Activated CD4-positive, alpha-beta T cell treated with anti-CD3 and anti-CD28 coated beads for 36 hours (primary cell): ENCODE measurements at regions of chr16 and their contacts with region 1.

Region 1: GRCh38 chr16:11255737-11256660 is at the start of gene SOCS1:
- DNase-seq: peak; percentile 94
- ATAC-seq: peak; percentile 54
- H3K4me3 Mint-ChIP-seq: peak within 1 kb of the TSS; percentile 98
- H3K27ac Mint-ChIP-seq: peak within 1 kb of the TSS; percentile 98
- H3K4me1 Mint-ChIP-seq: peaks cover 46% of the 10 kb centered on the region
- H3K27me3 Mint-ChIP-seq: no peaks in the 10 kb centered on the region
- total RNA-seq, gene SOCS1: 100.0 to 103 TPM

Region 2: DNA sequence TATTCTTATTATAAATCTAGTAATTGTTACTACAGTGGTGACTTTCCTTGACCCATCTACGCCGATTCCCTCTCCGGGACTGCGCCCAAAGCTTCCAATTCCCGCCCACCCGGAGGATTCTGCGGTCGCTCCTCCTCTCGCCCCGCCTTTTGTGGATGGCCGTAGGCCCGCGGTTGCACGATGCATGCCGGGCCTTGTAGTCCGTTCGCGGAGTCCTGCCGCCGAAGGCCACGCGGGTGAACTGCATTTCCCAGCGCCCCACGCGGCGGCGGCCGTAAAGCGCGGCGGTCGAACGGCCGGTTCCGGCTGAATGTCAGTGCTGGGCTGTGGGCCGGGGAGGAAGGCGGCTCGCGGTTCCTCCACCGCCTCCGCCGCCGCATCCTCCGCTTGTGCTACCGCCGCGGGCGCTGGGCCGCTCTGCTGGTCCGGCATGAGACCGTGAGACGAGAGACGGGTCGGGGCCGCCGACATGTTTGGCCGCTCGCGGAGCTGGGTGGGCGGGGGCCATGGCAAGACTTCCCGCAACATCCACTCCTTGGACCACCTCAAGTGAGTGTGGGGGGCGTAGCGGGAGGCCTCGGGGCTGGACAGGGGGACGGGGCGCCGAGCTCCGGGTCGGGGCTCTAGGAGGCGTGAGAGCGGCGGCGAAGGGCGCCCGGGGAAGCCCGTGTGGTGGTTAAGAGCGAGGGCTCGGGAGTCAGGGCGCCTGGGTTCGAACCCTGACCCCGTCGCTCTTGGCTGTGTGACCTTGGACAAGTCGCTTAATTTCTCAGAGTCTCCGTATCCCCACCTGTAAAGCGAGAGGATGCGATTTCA is 311.5 kb before region 1 on chr16 and contains the start of gene CLEC16A:
- CTCF ChIA-PET with region 1: no interaction called
- POLR2A ChIA-PET with region 1: interaction called, 3 read pairs
- intact Hi-C with region 1: loop called in 1 of 2 experiments (anchors 1 kb)
- DNase-seq: peak; percentile 98
- ATAC-seq: peak; percentile 77
- H3K4me3 Mint-ChIP-seq: peak within 1 kb of the TSS; percentile 95
- H3K27ac Mint-ChIP-seq: peak within 1 kb of the TSS; percentile 80
- H3K4me1 Mint-ChIP-seq: peaks cover 69% of the 10 kb centered on the region
- H3K27me3 Mint-ChIP-seq: no peaks in the 10 kb centered on the region
- total RNA-seq, gene CLEC16A: 23.5 to 25.4 TPM

Region 3: DNA sequence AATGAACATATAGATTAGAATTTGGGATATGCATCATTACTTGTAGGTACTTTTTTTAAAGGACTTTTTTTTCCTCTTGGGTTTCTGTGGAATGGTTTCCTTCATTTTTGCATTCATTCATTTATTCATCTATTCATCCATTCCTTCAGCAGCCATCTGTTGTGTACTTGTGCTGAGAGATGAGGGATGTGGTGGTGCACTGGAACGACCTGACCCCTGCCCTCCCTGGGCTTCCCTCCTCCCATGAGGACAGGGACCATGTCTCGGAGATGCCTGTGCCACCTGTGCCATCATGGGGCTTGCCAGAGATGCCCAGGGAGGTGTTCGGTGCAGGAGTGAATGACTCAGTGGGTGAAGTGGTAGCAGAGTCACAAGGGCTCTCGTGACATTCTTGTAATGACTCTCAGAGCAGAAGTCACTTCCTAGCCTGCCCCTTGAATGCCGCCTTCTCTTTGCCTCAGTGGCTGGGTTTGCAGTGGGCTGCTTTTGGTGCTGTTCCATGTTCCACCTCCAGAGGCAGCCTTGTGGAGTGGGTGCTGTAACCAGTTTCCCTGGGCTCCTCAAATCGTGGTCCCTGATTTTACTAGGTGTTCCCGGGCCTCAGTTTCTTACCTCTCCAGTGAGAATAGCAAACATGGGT is 267.7 kb before region 1 on chr16:
- CTCF ChIA-PET with region 1: interaction called, 4 read pairs
- POLR2A ChIA-PET with region 1: interaction called, 4 read pairs
- intact Hi-C with region 1: loop called (anchors 1 kb)
- DNase-seq: peak; percentile 91
- ATAC-seq: peak; percentile 88
- H3K4me3 Mint-ChIP-seq: peak overlapping the region; percentile 46
- H3K27ac Mint-ChIP-seq: peak overlapping the region; percentile 92
- H3K4me1 Mint-ChIP-seq: peaks cover 89% of the 10 kb centered on the region
- H3K27me3 Mint-ChIP-seq: no peaks in the 10 kb centered on the region

Region 4: DNA sequence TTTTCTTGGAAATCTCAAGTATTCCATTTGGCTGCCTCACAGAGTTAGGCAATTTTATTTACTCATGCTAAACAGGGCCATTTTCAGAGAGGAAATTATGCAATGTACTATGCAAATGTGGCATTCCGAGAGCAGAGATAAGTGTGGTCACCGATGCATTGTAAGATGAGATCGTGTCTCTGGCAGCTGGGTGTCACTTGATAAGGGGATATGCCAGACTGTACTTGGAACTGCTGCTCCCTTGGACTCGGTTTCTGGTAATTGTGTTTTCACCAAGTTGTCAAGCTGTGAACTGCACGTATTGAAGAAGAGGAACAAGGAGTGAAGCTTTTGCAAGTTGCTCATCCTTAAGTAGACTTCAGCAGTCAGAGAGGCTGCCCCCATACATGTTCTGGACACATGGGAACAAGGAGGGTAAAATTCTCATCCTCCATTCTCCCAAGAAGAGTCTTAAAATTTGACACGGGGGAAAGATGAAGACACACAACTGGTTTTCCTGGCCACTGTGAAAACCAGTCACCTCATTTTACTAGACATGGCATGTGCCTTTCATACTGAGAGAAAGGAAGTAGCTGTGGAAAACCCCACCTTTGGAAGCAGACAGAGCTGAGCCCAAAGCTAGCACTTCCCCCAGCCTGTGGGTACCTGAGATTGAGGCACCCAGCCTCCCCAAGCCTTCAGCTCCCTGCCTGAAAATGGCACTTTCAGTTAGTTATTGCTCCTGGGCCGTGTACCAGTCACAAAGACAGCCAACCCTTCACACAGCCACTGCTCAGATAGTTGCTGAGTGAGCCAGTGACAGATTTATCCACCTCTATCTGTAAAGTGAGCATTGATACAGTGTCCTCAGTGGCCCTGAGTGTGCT is 150.7 kb before region 1 on chr16:
- CTCF ChIA-PET with region 1: interaction called, 5 read pairs
- POLR2A ChIA-PET with region 1: interaction called, 7 read pairs
- intact Hi-C with region 1: loop called in 1 of 2 experiments (anchors 1 kb)
- DNase-seq: peak; percentile 61
- ATAC-seq: peak; percentile 67
- H3K4me3 Mint-ChIP-seq: peak overlapping the region; percentile 18
- H3K27ac Mint-ChIP-seq: peak overlapping the region; percentile 88
- H3K4me1 Mint-ChIP-seq: peaks cover 61% of the 10 kb centered on the region
- H3K27me3 Mint-ChIP-seq: no peaks in the 10 kb centered on the region

Region 5: DNA sequence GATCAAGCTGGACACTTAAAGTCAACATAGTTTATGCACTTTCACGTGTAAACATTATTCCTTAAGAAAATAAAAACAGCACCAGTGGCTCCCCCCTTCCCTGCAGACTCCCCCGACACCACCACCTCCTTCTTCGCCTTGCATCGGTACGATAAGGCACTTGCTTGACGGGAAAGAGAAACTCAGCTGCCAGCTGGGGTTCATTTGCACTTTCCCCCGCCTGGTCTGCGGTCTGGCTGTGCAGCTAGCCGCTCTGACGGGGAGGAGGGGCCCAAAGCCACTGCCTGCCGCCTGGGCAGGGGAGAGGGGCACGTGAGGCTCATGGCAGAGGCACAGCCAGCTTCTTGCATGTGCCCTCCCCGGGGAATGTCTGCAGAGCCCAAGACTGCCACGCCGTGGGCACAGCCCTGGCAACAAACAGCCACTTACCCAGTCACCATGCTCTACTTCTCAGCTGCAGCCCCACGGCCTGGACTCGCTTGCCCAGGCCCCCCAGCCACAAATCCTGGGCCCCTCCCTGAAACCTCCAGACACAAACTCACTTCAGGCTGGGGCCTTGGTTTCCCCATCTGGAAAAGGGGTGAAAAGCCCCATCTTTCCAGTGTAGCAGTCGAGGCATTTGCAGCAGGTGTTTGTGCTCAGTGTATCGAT is 41.6 kb after region 1 on chr16:
- CTCF ChIA-PET with region 1: interaction called, 4 read pairs
- POLR2A ChIA-PET with region 1: interaction called, 8 read pairs
- intact Hi-C with region 1: loop called in 1 of 2 experiments (anchors 5 kb)
- DNase-seq: peak; percentile 84
- ATAC-seq: peak; percentile 81
- H3K4me3 Mint-ChIP-seq: peak overlapping the region; percentile 59
- H3K27ac Mint-ChIP-seq: peak overlapping the region; percentile 78
- H3K4me1 Mint-ChIP-seq: peaks cover 28% of the 10 kb centered on the region
- H3K27me3 Mint-ChIP-seq: no peaks in the 10 kb centered on the region

Region 6: DNA sequence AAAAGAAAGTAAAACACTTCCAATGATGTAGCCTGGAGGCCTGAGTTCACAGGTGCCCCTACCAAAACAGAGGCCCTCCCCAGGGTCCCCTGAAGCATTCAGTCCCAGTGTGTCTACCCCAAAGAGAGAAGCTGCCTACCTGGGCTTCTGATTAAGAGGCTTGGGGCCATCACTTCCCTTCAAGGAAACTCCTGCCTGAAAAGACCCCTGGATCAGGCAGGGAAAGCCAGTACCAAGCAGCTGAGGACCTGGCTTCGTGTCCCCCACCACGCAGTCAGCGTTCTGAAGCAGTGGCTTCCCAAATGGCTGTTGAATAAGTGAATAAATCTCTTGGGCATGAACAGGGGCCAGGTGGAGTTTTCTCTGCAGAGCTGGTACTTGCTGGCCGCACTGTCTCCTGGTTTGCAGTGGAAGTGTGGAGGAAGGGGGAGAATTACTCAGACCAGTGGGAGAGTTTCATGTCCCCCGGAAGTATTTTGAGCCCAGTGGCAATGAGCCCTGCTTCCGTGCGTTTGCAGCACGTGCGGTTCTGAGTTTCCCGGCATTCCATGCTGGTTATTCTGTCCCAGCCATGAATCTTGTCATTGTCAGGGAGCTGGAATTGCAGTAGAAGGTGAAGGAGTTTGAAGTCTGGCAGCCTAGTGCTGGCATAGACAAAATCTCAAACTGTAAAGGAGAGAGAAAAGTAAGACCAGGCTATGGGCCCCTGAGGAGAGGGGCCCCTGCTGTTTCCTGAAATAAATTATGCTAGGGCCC is 116.3 kb after region 1 on chr16:
- CTCF ChIA-PET with region 1: interaction called, 8 read pairs
- POLR2A ChIA-PET with region 1: interaction called, 11 read pairs
- intact Hi-C with region 1: no loop called
- DNase-seq: no peak
- ATAC-seq: peak; percentile 10
- H3K4me3 Mint-ChIP-seq: no peak overlapping the region
- H3K27ac Mint-ChIP-seq: no peak overlapping the region
- H3K4me1 Mint-ChIP-seq: peaks cover 15% of the 10 kb centered on the region
- H3K27me3 Mint-ChIP-seq: no peaks in the 10 kb centered on the region

Region 7: GRCh38 chr16:11915644-11916523 is 659.9 kb after region 1 on chr16 and contains the start of gene GSPT1:
- CTCF ChIA-PET with region 1: no interaction called
- POLR2A ChIA-PET with region 1: no interaction called
- intact Hi-C with region 1: loop called in 1 of 2 experiments (anchors 2 kb)
- DNase-seq: peak; percentile 100
- ATAC-seq: peak; percentile 89
- H3K4me3 Mint-ChIP-seq: peak within 1 kb of the TSS; percentile 89
- H3K27ac Mint-ChIP-seq: peak within 1 kb of the TSS; percentile 96
- H3K4me1 Mint-ChIP-seq: peaks cover 32% of the 10 kb centered on the region
- H3K27me3 Mint-ChIP-seq: no peaks in the 10 kb centered on the region
- total RNA-seq, gene GSPT1: 234 to 260 TPM